ENCODE measurements at regions of chr2 and their contacts with region 1.

Region 1: DNA sequence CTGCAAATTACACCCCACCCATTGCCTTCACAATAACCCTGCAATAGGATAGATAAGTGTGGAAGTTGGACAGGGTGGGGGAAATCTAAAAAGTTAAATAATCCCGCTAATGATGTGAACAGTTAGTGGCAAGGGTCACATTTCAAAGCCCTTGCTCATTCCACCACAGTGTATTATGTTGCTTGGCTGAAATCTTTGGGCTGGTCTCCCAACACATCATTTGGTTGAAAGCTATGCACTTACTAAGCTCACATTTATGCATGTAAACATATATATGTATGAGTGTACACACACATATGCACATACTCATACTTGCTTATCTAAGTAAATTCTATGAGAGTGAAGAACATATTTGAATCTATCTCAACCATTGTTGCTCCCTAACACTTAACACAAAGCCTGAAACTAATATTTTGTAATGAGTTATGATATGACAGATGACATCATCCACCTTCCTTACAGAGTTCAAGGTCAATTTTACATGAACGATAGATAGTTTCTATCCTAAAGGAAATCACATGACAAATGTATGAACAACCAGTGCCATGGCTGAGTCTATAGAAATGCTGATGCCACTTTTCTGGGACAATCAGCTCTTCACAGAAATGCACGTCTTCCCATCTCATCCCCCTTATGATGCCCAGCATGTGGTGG is 197.6 kb downstream of the RDH14 start:
- DNase-seq: no peak
- H3K4me3 ChIP-seq: no peak overlapping the region
- H3K27ac ChIP-seq: no peak overlapping the region
- H3K4me1 ChIP-seq: no peaks in the 10 kb centered on the region
- H3K27me3 ChIP-seq: peaks cover 0 to 1% (median 0%) of the 10 kb centered on the region in 4 experiments; a peak in 1 of 7 replicates
- CTCF ChIP-seq: no peak
- EP300 ChIP-seq: no peak
- POLR2A ChIP-seq: no peak
- RAD21 ChIP-seq: no peak

Region 2: GRCh38 chr2:18345848-18346743 is 16.7 kb before region 1 on chr2:
- CTCF ChIA-PET with region 1: no interaction called
- POLR2A ChIA-PET with region 1: no interaction called
- DNase-seq: no peak
- H3K4me3 ChIP-seq: no peak overlapping the region
- H3K27ac ChIP-seq: no peak overlapping the region
- H3K4me1 ChIP-seq: no peaks in the 10 kb centered on the region
- H3K27me3 ChIP-seq: no peaks in the 10 kb centered on the region
- CTCF ChIP-seq: no peak
- EP300 ChIP-seq: no peak
- POLR2A ChIP-seq: no peak
- RAD21 ChIP-seq: no peak

Region 3: DNA sequence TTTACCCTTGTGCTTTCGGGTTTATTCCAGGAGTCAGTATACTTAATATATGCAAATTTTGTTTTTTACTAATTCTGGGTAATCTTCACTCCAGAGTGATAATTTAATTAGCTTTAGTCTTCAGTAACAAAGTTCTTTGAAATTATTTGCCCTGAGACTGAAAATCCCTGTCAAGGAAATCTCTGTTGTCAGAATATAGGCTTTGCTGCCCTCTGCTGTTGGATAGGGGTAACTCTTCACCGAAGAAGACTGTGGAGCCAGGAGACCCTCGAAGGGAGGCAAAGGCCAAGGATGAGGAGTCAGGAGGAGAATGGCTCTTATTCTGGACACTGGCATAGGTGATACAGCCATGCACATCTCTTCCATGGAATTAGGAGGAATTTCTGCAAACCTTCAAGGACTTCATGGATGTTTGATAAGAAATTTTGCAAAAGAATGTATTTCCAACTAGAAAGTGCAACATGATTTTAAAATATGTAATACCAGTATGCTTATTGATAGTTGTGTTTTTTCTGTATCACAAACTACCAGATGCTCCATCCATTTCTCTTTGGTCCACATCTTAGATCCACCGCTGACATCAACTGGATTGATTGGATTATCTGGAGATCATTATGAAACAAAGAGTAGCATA is 15.3 kb after region 1 on chr2:
- CTCF ChIA-PET with region 1: interaction called, 10 read pairs
- POLR2A ChIA-PET with region 1: no interaction called
- DNase-seq: peak in 1 of 2 experiments; percentile 58
- H3K4me3 ChIP-seq: no peak overlapping the region
- H3K27ac ChIP-seq: no peak overlapping the region
- H3K4me1 ChIP-seq: no peaks in the 10 kb centered on the region
- H3K27me3 ChIP-seq: no peaks in the 10 kb centered on the region
- CTCF ChIP-seq: peak; percentile 56 to 76 (median 68)
- EP300 ChIP-seq: no peak
- POLR2A ChIP-seq: no peak
- RAD21 ChIP-seq: peak; percentile 76 to 85